Heart left ventricle (tissue), 16 donors: ENCODE measurements at regions of chr3 and their contacts with region 1.

Region 1: DNA sequence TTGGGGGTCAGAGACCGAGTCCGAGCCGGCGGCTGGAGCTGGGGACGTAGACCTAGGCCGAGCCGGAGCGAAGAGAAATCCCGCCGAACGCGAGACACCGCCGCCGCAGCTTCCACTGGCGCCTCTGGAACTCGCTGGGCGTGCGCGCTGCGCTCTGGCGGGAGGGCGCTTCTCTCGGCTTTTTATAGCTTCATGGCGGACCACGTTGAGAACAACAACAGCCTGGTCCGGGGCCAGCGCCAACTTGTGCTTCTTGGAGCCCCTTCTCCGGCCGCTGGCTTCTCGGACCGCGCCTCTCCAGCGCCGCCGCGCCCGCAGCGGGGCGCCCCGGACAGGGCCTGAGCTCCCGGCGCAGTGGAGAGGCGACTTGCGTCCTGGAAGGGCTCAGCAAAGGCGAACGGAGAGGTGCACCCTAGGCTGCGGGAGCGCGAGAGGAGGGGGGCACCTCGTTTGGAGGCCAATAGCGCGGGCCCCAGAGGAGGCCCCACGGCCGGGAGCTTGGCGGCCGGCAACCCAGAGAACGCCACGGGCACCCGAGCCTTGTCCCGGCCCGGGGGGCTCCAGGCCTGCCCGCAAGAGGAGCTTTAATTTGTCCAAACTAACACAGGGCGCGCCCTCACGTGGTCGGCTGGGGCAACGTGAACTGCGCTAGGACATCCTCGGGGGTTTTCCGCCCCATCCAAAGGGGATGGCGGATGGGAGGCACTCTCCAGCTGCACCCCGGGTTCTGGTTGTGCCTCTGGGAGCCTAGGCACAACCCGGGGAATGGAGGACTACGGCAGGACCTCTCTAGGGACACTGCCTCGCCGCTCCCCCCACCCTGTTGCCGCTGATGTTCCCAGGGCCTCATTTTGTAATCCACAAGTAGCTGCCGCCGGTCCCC is 37.7 kb downstream of the HMCES start:
- DNase-seq: peak; percentile 84 to 92 (median 89)
- ATAC-seq: peak; percentile 21 to 62 (median 52)
- H3K4me3 ChIP-seq: peak overlapping the region; percentile 45 to 98 (median 90)
- H3K27ac ChIP-seq: peak overlapping the region; percentile 75 to 97 (median 92)
- H3K4me1 ChIP-seq: peaks cover 0 to 27% (median 21%) of the 10 kb centered on the region in 12 donors
- H3K27me3 ChIP-seq: no peaks in the 10 kb centered on the region
- CTCF ChIP-seq: peak; percentile 20 to 85 (median 58)
- POLR2A ChIP-seq: peak; percentile 94 to 99

Region 2: GRCh38 chr3:129278439-129278970 is 37.9 kb before region 1 on chr3 and contains the start of gene HMCES:
- intact Hi-C with region 1: loop called in 8 of 10 experiments (anchors 1 to 5 kb)
- DNase-seq: peak; percentile 95 to 98 (median 97)
- ATAC-seq: peak; percentile 94 to 98 (median 96)
- H3K4me3 ChIP-seq: peak within 1 kb of the TSS; percentile 77 to 98 (median 91)
- H3K27ac ChIP-seq: peak within 1 kb of the TSS; percentile 93 to 98 (median 96)
- H3K4me1 ChIP-seq: peaks cover 0 to 40% (median 17%) of the 10 kb centered on the region in 12 donors
- H3K27me3 ChIP-seq: no peaks in the 10 kb centered on the region
- CTCF ChIP-seq: no peak
- POLR2A ChIP-seq: no peak
- total RNA-seq, gene HMCES: 30.0 to 46.3 (median 37.7) TPM